ENCODE measurements at regions of chr6 and their contacts with region 1.

Region 1: GRCh38 chr6:3913077-3913957 is 64.1 kb downstream of the FAM50B start:
- DNase-seq: peak; percentile 99
- ATAC-seq: peak; percentile 84
- H3K4me3 ChIP-seq: peak overlapping the region in 2 of 3 experiments; percentile 4 to 34; a peak in 2 of 6 replicates
- H3K27ac ChIP-seq: peak overlapping the region; percentile 94
- H3K4me1 ChIP-seq: peaks cover 76% of the 10 kb centered on the region
- H3K27me3 ChIP-seq: no peaks in the 10 kb centered on the region
- CTCF ChIP-seq: no peak
- EP300 ChIP-seq: peak; percentile 57 to 97
- POLR2A ChIP-seq: 0 out of 4 replicates have a peak, but pooled peaks of 1 of the 2 experiments have one; percentile 18
- RAD21 ChIP-seq: 0 out of 2 replicates have a peak, but pooled peaks have one; percentile 12

Region 2: DNA sequence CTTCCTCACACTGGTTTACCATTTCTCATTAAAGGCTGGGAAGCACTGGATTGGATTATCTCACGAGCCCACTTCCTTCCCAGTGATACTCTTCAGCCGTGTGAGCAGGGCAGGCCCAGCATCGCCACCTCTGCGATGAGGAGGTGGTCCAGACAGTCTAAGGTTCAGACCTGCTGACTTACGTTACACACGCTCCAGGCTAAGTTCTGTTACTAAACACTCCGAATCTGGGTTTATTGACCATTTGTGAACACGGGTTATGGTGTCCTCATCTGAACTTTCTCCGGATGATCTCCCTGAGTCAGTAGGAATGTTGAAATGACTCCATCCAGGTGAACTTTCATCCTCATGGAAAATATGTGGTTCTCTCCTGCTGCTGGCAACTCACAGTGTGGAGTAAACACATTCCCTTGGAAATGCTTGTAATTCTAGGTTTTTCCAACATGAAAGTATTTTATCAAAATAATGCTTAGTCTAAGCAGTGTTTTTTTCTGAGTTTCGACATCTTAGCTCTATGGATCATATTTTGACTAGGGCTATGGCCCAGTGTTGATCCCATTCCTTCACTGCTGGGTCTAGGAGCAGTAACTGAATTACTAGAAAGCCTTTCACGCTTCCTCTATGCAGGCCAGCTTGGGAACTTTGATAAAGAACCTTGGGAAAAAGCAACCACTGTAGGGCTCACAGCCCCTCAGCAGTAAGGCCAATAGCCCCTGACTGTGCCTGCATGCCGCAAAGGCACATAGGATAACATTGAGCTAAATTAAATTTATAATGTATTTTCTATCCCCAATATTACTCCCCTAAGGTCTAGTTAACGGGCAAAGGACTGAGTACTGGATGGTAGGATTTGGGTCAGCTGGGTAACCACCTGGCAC is 124.1 kb before region 1 on chr6:
- CTCF ChIA-PET with region 1: no interaction called
- POLR2A ChIA-PET with region 1: interaction called, 46 read pairs
- in situ Hi-C with region 1: no loop called
- intact Hi-C with region 1: no loop called
- DNase-seq: peak; percentile 100
- ATAC-seq: peak; percentile 91
- H3K4me3 ChIP-seq: peak overlapping the region; percentile 40 to 73 (median 45)
- H3K27ac ChIP-seq: peak overlapping the region; percentile 97
- H3K4me1 ChIP-seq: peaks cover 62% of the 10 kb centered on the region
- H3K27me3 ChIP-seq: no peaks in the 10 kb centered on the region
- CTCF ChIP-seq: peak; percentile 7; the same call in 1 of the 2 replicates
- EP300 ChIP-seq: peak; percentile 88 to 97
- POLR2A ChIP-seq: peak; percentile 72 to 88
- RAD21 ChIP-seq: peak; percentile 21

Region 3: DNA sequence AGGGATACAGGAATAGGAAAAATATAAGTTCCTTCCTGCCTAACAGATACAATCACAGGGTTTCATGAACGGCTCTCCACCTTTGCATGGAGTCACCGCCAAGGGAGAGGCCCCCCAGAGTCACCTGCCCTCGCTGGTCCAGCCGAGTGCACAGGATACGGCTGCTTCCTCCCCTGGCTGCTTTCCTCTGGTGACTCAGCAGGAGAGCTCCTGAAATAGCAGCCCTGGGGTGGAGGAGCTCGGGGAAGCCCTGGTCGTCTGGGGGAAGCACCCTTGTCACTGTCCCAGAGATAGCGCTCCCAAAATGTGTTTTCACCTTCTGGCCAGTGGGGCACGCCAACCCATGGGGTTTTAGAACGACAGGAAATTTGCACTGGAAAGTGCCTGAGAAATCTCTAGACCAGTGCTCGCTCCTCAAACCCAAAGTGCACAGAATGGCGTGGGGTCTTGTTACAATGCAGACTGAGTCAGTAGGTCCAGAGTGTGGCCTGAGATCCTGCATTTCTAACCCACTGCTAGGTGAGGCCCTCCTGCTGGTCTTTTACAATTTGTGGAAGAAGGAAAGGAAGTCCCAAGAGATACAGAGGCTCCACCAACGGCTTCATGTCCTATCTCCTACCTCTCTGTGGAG is 100.1 kb before region 1 on chr6:
- CTCF ChIA-PET with region 1: no interaction called
- POLR2A ChIA-PET with region 1: interaction called, 10 read pairs
- in situ Hi-C with region 1: no loop called
- intact Hi-C with region 1: no loop called
- DNase-seq: peak; percentile 33
- ATAC-seq: peak; percentile 78
- H3K4me3 ChIP-seq: peak overlapping the region in 1 of 3 experiments; percentile 25; a peak in 1 of 6 replicates
- H3K27ac ChIP-seq: peak overlapping the region; percentile 15
- H3K4me1 ChIP-seq: peaks cover 30% of the 10 kb centered on the region
- H3K27me3 ChIP-seq: no peaks in the 10 kb centered on the region
- CTCF ChIP-seq: no peak; the same call in 1 of the 2 replicates
- EP300 ChIP-seq: no peak
- POLR2A ChIP-seq: no peak
- RAD21 ChIP-seq: no peak

Region 4: GRCh38 chr6:3835055-3835731 is 78.1 kb before region 1 on chr6:
- CTCF ChIA-PET with region 1: no interaction called
- POLR2A ChIA-PET with region 1: interaction called, 49 read pairs
- in situ Hi-C with region 1: no loop called
- intact Hi-C with region 1: loop called (anchors 1 kb)
- DNase-seq: peak; percentile 91
- ATAC-seq: peak; percentile 57
- H3K4me3 ChIP-seq: no peak overlapping the region
- H3K27ac ChIP-seq: peak overlapping the region; percentile 67
- H3K4me1 ChIP-seq: peaks cover 55% of the 10 kb centered on the region
- H3K27me3 ChIP-seq: no peaks in the 10 kb centered on the region
- CTCF ChIP-seq: peak; percentile 75
- EP300 ChIP-seq: peak; percentile 88 to 91
- POLR2A ChIP-seq: no peak
- RAD21 ChIP-seq: peak; percentile 85

Region 5: DNA sequence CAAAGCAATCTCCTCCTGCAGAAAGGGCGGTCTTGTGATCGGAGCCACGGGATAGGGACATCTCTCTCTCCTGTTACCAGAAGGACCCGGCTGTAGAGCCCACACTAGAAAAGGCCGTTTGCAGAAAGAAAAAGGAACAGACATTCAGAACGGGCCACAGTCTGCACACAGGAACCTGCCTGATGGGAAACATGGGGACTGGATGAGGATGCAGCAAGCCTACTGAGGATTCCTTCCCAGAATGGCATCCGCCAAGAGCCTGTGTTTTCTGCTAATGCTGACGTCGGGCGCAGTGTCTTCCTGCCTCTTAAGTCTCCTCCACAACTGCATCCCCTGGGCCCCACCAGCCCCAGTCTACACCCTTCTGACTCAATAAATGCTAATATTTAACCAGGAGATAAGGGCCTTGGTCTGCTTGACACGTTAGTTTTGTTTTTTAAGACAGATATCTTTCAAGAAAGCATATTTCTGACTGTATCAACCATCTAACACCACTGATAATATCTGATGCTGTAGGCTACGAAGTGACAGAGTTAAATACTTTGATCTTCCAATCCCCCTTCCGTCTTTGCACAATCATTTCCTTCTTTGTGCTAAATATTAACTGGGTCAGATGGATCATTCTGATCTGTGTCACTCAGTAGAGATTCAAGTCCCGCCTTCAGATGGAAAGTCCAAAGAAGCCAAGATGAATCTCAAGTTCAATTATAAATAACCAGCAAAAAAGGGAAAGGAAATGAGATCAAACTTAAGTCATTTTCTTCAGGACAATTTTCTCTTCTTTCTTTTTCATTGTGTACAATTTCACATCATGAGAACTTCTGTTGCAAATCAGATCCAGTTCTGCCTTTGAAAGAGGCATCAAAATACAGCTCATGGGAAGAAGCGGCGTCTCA is 43.4 kb before region 1 on chr6:
- CTCF ChIA-PET with region 1: no interaction called
- POLR2A ChIA-PET with region 1: interaction called, 12 read pairs
- in situ Hi-C with region 1: no loop called
- intact Hi-C with region 1: no loop called
- DNase-seq: peak; percentile 92
- ATAC-seq: peak; percentile 84
- H3K4me3 ChIP-seq: peak overlapping the region; percentile 11 to 64 (median 41)
- H3K27ac ChIP-seq: peak overlapping the region; percentile 79
- H3K4me1 ChIP-seq: peaks cover 68% of the 10 kb centered on the region
- H3K27me3 ChIP-seq: no peaks in the 10 kb centered on the region
- CTCF ChIP-seq: no peak
- EP300 ChIP-seq: peak in 1 of 2 experiments; percentile 89; a peak in 2 of 4 replicates
- POLR2A ChIP-seq: peak; percentile 33 to 85; a peak in 3 of 4 replicates
- RAD21 ChIP-seq: no peak

Region 6: DNA sequence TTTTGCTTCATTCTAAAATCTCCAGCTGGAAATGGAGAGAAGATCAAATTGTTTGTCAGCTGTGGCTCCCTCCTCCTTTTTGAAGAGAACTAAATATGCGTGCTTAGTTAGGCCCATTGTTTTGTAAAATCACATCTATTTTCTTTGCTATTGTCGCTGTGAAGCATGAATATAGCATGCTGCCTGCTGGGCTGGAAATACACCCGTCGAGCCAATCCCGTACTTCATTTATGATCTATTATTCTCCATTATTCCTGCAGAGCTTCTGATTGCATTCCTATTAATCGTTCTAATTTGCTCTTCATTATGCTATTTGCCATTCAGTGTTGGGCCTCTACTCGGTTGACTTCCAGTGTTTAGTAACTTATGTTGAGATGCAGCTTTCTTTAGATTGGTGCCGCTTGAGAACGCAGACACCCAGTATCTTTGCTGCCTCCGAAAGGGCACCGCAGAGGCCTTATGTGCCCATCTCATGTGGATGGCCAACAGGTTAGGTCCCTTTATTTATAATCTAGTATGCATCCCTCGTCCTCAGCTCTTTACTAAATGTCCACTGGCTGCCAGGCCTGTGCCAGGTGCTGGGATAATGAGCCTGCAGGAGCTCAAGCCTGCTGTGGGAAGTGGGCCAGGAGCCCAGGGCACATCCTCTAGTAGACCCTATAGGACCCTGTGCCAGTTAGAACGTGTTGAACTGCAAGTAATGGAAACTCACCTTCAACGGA is 18.6 kb before region 1 on chr6:
- CTCF ChIA-PET with region 1: no interaction called
- POLR2A ChIA-PET with region 1: interaction called, 38 read pairs
- in situ Hi-C with region 1: no loop called
- intact Hi-C with region 1: no loop called
- DNase-seq: no peak
- ATAC-seq: no peak
- H3K4me3 ChIP-seq: no peak overlapping the region
- H3K27ac ChIP-seq: no peak overlapping the region
- H3K4me1 ChIP-seq: peaks cover 64% of the 10 kb centered on the region
- H3K27me3 ChIP-seq: no peaks in the 10 kb centered on the region
- CTCF ChIP-seq: no peak
- EP300 ChIP-seq: no peak
- POLR2A ChIP-seq: no peak
- RAD21 ChIP-seq: no peak

Region 7: DNA sequence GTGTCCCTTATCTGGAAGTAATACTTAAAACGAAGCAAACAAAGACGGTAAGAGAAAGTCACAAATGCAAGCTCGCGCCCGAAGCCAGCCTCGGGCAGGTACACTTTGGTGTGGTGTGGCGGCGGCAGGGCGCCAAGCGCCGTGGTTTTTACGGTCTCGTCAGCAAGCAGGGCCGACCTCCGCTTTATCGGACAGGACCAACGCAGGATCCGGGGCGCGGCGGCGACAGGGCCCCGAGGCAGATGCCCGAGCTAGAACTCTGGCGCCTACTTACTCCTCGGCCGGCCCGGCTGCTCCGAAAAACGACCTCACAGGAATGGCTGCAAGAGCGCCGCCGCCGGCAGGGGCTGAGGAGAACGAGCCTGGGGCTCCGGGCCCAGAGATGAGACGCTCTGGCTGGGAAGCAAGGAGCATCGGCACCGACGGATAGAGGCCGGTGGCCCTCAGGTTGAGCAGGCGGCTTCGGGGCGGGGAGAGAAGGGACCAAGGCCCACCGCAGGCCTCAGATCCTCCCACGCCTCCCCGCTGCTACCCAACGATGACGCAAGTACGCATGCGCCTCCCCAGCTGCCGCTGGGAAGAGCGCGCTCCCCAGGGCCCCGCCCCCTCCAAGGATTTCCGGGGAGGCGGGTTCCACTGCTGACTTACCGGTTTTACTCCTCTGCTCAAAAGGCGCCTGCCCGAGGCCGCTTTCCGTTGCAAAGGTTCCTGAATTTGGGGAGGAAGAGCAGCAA is 105.0 kb after region 1 on chr6:
- CTCF ChIA-PET with region 1: no interaction called
- POLR2A ChIA-PET with region 1: interaction called, 21 read pairs
- in situ Hi-C with region 1: no loop called
- intact Hi-C with region 1: no loop called
- DNase-seq: peak; percentile 96
- ATAC-seq: peak; percentile 80
- H3K4me3 ChIP-seq: peak overlapping the region; percentile 81 to 91 (median 82)
- H3K27ac ChIP-seq: peak overlapping the region; percentile 97
- H3K4me1 ChIP-seq: peaks cover 32% of the 10 kb centered on the region
- H3K27me3 ChIP-seq: no peaks in the 10 kb centered on the region; a peak in 1 of 5 replicates
- CTCF ChIP-seq: peak; percentile 74
- EP300 ChIP-seq: no peak
- POLR2A ChIP-seq: peak; percentile 93 to 95
- RAD21 ChIP-seq: peak; percentile 31; the same call in 1 of the 2 replicates

Region 8: GRCh38 chr6:4125936-4126864 is 212.9 kb after region 1 on chr6:
- CTCF ChIA-PET with region 1: no interaction called
- POLR2A ChIA-PET with region 1: no interaction called
- in situ Hi-C with region 1: no loop called
- intact Hi-C with region 1: no loop called
- DNase-seq: peak; percentile 84
- ATAC-seq: peak; percentile 94
- H3K4me3 ChIP-seq: no peak overlapping the region; a peak in 1 of 6 replicates
- H3K27ac ChIP-seq: peak overlapping the region; percentile 11
- H3K4me1 ChIP-seq: peaks cover 34% of the 10 kb centered on the region
- H3K27me3 ChIP-seq: no peaks in the 10 kb centered on the region
- CTCF ChIP-seq: peak; percentile 44
- EP300 ChIP-seq: no peak
- POLR2A ChIP-seq: no peak
- RAD21 ChIP-seq: no peak

Measured in HepG2 (cell line).